PC-3 (cell line): ENCODE measurements at regions of chr11 and their contacts with region 1.

Region 1: GRCh38 chr11:113730887-113731726 is 25.0 kb upstream of the TMPRSS5 start:
- DNase-seq: peak; percentile 83
- ATAC-seq: peak; percentile 87
- H3K4me3 ChIP-seq: no peak overlapping the region
- H3K27ac ChIP-seq: no peak overlapping the region
- H3K4me1 ChIP-seq: peaks cover under 1% of the 10 kb centered on the region; the same call in 1 of the 2 replicates
- H3K27me3 ChIP-seq: no peaks in the 10 kb centered on the region
- CTCF ChIP-seq: peak; percentile 93

Region 2: DNA sequence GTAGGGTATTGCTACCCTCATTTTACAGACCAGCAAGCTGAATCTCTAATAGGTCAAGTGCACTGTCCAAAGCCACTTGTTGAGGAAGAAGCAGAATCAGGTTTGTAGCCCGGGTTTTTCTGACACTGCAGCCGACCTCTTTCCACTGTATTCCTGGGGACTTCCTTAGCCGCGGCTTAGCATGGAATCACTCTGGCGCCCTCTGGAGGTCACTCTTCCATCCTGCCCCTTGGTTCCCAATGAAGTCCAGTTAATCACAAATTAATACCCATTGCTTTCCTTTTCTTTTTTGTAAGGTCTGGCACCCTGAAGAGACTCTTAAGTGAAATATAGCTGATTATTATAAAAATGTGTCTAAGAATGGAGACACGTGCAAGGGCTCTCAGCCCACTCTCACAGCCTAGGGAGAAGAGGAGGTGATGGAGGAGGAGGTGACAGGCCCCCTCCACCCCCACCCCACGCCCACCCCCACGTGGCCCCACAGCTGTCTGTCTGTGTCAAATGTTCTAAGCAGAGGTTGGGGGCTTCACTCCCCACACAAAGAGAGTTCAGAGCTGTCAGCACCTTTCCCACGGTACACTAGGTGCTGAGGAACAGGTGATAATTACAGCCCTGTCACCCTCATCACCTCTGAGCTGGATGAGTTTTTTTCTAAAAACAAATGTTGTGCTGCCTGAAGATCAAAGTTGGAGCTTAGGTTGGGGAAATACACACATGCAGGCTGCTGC is 198.2 kb before region 1 on chr11:
- CTCF ChIA-PET with region 1: no interaction called
- POLR2A ChIA-PET with region 1: no interaction called
- intact Hi-C with region 1: loop called (anchors 1 kb)
- DNase-seq: peak; percentile 90
- ATAC-seq: peak; percentile 93
- H3K4me3 ChIP-seq: no peak overlapping the region
- H3K27ac ChIP-seq: no peak overlapping the region
- H3K4me1 ChIP-seq: no peaks in the 10 kb centered on the region
- H3K27me3 ChIP-seq: 0 out of 2 replicates have a peak, but pooled peaks cover 4% of the 10 kb centered on the region
- CTCF ChIP-seq: peak; percentile 95

Region 3: GRCh38 chr11:113553235-113553634 is 177.9 kb before region 1 on chr11:
- CTCF ChIA-PET with region 1: no interaction called
- POLR2A ChIA-PET with region 1: no interaction called
- intact Hi-C with region 1: loop called (anchors 5 kb)
- DNase-seq: peak; percentile 93
- ATAC-seq: peak; percentile 71
- H3K4me3 ChIP-seq: no peak overlapping the region
- H3K27ac ChIP-seq: no peak overlapping the region
- H3K4me1 ChIP-seq: peaks cover 14% of the 10 kb centered on the region
- H3K27me3 ChIP-seq: no peaks in the 10 kb centered on the region
- CTCF ChIP-seq: no peak

Region 4: GRCh38 chr11:113563766-113564526 is 167.2 kb before region 1 on chr11:
- CTCF ChIA-PET with region 1: no interaction called
- POLR2A ChIA-PET with region 1: no interaction called
- intact Hi-C with region 1: no loop called
- DNase-seq: peak; percentile 53
- ATAC-seq: no peak
- H3K4me3 ChIP-seq: no peak overlapping the region
- H3K27ac ChIP-seq: no peak overlapping the region
- H3K4me1 ChIP-seq: peaks cover 19% of the 10 kb centered on the region; the same call in 1 of the 2 replicates
- H3K27me3 ChIP-seq: no peaks in the 10 kb centered on the region
- CTCF ChIP-seq: no peak